Right cardiac atrium (tissue), 5 donors: ENCODE measurements at regions of chr22 and their contacts with region 1.

Region 1: DNA sequence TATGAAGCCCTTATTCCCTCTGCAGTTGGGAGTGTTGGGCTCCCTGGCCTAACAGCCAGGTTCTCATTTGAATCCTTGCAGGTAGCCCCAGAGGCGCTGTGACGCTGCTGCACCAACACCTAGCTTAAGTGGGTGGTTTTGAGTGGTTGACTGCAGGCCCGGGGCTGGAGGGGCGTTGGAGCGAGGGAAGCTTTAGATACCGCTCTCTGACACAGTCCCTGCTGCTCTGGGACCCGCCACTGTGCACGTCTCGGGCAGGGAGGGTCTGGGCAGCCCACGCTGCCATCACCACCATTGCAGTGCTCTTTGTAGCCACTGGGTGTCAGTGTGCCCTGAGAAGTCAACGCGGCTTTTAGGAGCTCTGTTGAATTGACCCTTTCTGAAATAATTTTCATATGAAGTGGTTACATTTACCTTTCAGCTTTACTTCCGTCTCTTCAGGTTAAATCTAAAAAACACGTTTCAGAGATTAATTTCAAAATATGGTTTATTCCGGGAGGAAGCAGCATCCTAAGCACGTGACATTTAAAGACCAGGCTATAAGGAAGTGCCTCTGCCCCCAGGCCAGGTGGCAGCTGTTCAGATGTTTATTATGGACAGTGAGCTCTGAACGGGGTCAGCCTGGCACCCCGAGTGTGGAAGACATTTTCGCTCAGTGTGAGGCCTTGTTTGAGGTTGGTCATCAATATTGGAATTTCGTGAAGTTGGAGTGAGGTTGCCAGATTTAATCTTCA is 30.9 kb upstream of the PARVB start:
- DNase-seq: peak; percentile 50 to 82 (median 74)
- ATAC-seq: peak; percentile 73 to 75
- H3K4me3 ChIP-seq: no peak overlapping the region
- H3K27ac ChIP-seq: no peak overlapping the region
- H3K4me1 ChIP-seq: no peaks in the 10 kb centered on the region
- H3K27me3 ChIP-seq: no peaks in the 10 kb centered on the region

Region 2: GRCh38 chr22:44026630-44027511 is 33.7 kb after region 1 on chr22:
- intact Hi-C with region 1: no loop called
- DNase-seq: peak; percentile 85 to 92 (median 89)
- ATAC-seq: peak; percentile 63 to 81
- H3K4me3 ChIP-seq: peak overlapping the region; percentile 11
- H3K27ac ChIP-seq: peak overlapping the region; percentile 89
- H3K4me1 ChIP-seq: peaks cover 14% of the 10 kb centered on the region
- H3K27me3 ChIP-seq: no peaks in the 10 kb centered on the region

Region 3: GRCh38 chr22:44080936-44081861 is 88.0 kb after region 1 on chr22:
- intact Hi-C with region 1: loop called (anchors 5 to 10 kb)
- DNase-seq: peak; percentile 81 to 93 (median 83)
- ATAC-seq: peak in 1 of 2 donors; percentile 21
- H3K4me3 ChIP-seq: no peak overlapping the region
- H3K27ac ChIP-seq: no peak overlapping the region
- H3K4me1 ChIP-seq: no peaks in the 10 kb centered on the region
- H3K27me3 ChIP-seq: no peaks in the 10 kb centered on the region

Region 4: DNA sequence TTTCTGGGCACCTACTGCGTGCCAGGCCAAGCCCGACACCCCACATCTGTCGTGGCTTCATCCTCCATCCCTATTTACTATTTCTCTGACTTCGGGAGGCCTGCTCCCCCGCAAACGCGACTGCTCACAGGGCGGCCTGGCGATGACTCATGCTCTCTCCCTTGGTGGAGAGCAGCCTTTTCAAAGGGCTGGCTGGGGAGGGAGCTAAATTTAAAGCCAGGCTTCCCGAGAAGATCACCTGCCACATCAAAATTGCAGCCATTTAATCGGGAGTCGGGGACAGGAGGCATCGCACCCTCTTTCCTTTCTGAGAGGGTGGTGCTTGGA is 344.4 kb after region 1 on chr22:
- intact Hi-C with region 1: loop called in 1 of 4 experiments (anchors 10 kb)
- DNase-seq: peak in 2 of 3 donors; percentile 63 to 69
- ATAC-seq: peak in 1 of 2 donors; percentile 30
- H3K4me3 ChIP-seq: no peak overlapping the region
- H3K27ac ChIP-seq: no peak overlapping the region
- H3K4me1 ChIP-seq: no peaks in the 10 kb centered on the region
- H3K27me3 ChIP-seq: no peaks in the 10 kb centered on the region